Esophagus muscularis mucosa (tissue), 4 donors: ENCODE measurements at regions of chr1 and their contacts with region 1.

Region 1: GRCh38 chr1:86965012-86965826 is 50.8 kb downstream of the HS2ST1 start:
- DNase-seq: no peak
- H3K4me3 ChIP-seq: no peak overlapping the region
- H3K27ac ChIP-seq: no peak overlapping the region
- H3K4me1 ChIP-seq: no peaks in the 10 kb centered on the region
- H3K27me3 ChIP-seq: no peaks in the 10 kb centered on the region
- CTCF ChIP-seq: peak; percentile 56 to 62 (median 60)
- EP300 ChIP-seq: no peak
- POLR2A ChIP-seq: no peak

Region 2: GRCh38 chr1:86833461-86834215 is 131.6 kb before region 1 on chr1:
- intact Hi-C with region 1: loop called (anchors 2 kb)
- DNase-seq: no peak
- H3K4me3 ChIP-seq: no peak overlapping the region
- H3K27ac ChIP-seq: no peak overlapping the region
- H3K4me1 ChIP-seq: peaks cover 0 to 6% (median 3%) of the 10 kb centered on the region in 4 donors
- H3K27me3 ChIP-seq: no peaks in the 10 kb centered on the region
- CTCF ChIP-seq: peak; percentile 58 to 68 (median 64)
- EP300 ChIP-seq: no peak
- POLR2A ChIP-seq: no peak